Naive thymus-derived CD4-positive, alpha-beta T cell (primary cell): ENCODE measurements at regions of chr14 and their contacts with region 1.

Region 1: DNA sequence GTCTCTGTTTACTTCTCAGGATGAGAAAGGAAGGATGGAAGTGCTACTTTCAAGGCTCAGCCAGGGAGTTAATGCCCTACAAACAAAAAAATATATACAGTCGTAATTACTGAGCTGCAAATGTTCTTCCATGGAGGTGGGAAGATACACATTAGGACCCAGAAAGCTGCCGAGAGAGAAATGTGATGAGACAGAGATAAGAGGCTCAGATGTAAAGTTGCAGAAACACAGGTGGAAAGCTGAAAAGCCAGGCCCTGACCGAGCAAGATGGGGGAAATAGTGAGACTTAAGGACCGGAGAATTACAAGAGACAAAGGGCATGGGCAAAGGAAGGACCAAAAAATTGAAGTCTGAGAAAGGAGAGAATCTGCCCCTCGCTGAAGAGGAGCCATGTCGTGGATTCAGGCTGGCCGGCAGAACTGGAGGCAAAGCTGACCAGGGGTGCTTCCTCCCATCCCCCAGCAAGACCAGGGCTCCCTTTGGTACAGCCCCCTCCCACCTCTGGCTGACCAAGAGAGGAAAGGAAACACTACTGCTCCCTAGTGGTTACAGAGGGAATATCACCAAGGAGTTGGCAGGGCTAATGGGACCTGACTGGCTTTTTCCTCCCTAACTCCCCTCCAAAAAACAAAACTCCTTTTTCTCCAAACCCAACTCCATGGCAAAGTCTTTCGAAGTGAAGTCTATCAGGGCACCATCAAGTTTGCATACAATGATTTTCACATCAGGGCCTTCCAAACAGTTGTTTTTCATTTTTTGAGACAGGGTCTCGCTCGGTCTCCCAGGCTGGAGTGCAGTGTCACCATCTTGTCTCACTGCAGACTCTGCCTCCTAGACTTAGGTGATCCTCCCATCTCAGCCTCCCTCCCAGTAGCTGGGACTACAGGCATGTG is 12.1 kb downstream of the ZFHX2 start:
- DNase-seq: peak in 6 of 9 donors; percentile 20 to 53 (median 34)
- ATAC-seq: peak; percentile 85
- H3K4me3 ChIP-seq: no peak overlapping the region
- H3K4me3 Mint-ChIP-seq: no peak overlapping the region
- H3K27ac ChIP-seq: no peak overlapping the region
- H3K27ac Mint-ChIP-seq: peak overlapping the region in 1 of 9 donors; percentile 83
- H3K4me1 ChIP-seq: no peaks in the 10 kb centered on the region
- H3K4me1 Mint-ChIP-seq: peaks cover 0 to 6% (median 0%) of the 10 kb centered on the region in 7 donors
- H3K27me3 ChIP-seq: no peaks in the 10 kb centered on the region
- H3K27me3 Mint-ChIP-seq: no peaks in the 10 kb centered on the region

Region 2: DNA sequence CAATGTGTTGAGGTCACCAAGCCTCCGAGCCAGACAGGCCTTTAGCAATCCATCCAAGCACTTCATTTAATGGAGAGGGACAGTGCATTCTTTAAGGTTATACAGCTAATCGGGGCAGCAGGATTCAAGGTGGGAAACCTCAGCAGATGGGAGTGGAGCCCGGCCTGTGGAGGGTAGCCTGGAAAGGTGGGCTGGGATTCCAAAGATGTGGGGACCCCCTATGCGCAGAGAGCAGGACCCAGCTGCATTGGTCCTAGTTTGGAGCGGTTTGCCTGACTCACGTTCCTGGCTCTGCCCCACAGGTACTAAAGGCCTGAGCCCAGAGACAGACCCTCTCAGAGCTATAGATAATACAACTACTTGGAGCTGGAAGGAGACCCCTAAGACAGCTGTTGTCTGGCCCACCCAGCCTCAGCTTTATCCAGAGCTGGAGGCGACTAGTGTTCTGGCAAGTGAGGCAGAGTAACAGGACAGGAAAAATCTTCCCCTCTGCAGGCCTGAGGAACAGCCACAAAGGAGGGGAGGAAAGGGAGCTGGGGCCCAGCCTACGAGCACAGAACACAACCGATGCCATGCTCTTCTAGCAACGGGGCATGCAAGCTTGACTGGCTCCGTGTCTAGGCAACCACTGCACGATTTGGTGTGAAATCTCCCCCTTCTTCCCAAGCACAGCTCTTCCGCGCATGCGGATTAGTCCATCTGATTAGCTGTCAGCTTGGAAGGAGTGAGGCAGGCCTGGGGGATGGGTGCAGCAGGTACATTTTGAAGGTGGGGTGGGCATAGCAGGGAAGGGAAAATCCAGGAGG is 103.0 kb before region 1 on chr14:
- CTCF ChIA-PET with region 1: no interaction called
- POLR2A ChIA-PET with region 1: no interaction called
- intact Hi-C with region 1: no loop called
- DNase-seq: peak in 1 of 9 donors; percentile 13
- ATAC-seq: no peak
- H3K4me3 ChIP-seq: no peak overlapping the region
- H3K4me3 Mint-ChIP-seq: no peak overlapping the region
- H3K27ac ChIP-seq: no peak overlapping the region
- H3K27ac Mint-ChIP-seq: no peak overlapping the region
- H3K4me1 ChIP-seq: no peaks in the 10 kb centered on the region
- H3K4me1 Mint-ChIP-seq: peaks cover 0 to 11% (median 0%) of the 10 kb centered on the region in 7 donors
- H3K27me3 ChIP-seq: no peaks in the 10 kb centered on the region
- H3K27me3 Mint-ChIP-seq: peaks cover 0 to 11% (median 0%) of the 10 kb centered on the region in 5 donors

Region 3: GRCh38 chr14:23478111-23478759 is 61.3 kb before region 1 on chr14:
- CTCF ChIA-PET with region 1: interaction called, 43 read pairs
- POLR2A ChIA-PET with region 1: interaction called, 3 read pairs
- intact Hi-C with region 1: loop called (anchors 1 kb)
- DNase-seq: peak; percentile 35 to 75 (median 67)
- ATAC-seq: peak; percentile 89
- H3K4me3 ChIP-seq: no peak overlapping the region
- H3K4me3 Mint-ChIP-seq: peak overlapping the region in 1 of 10 donors; percentile 14
- H3K27ac ChIP-seq: no peak overlapping the region
- H3K27ac Mint-ChIP-seq: peak overlapping the region in 3 of 9 donors; percentile 7 to 61 (median 29)
- H3K4me1 ChIP-seq: no peaks in the 10 kb centered on the region
- H3K4me1 Mint-ChIP-seq: peaks cover 2 to 20% (median 13%) of the 10 kb centered on the region in 7 donors
- H3K27me3 ChIP-seq: no peaks in the 10 kb centered on the region
- H3K27me3 Mint-ChIP-seq: no peaks in the 10 kb centered on the region

Region 4: GRCh38 chr14:23555882-23556699 is 16.6 kb after region 1 on chr14 and contains the start of gene THTPA:
- CTCF ChIA-PET with region 1: interaction called, 25 read pairs
- POLR2A ChIA-PET with region 1: no interaction called
- intact Hi-C with region 1: loop called in 1 of 2 experiments (anchors 1 kb)
- DNase-seq: peak; percentile 84 to 96 (median 89)
- ATAC-seq: peak; percentile 94
- H3K4me3 ChIP-seq: peak within 1 kb of the TSS; percentile 84
- H3K4me3 Mint-ChIP-seq: peak within 1 kb of the TSS; percentile 80 to 99 (median 96)
- H3K27ac ChIP-seq: peak within 1 kb of the TSS; percentile 83
- H3K27ac Mint-ChIP-seq: peak within 1 kb of the TSS; percentile 78 to 97 (median 94)
- H3K4me1 ChIP-seq: peaks cover 10 to 16% of the 10 kb centered on the region in 2 donors
- H3K4me1 Mint-ChIP-seq: peaks cover 18 to 45% (median 38%) of the 10 kb centered on the region in 7 donors
- H3K27me3 ChIP-seq: no peaks in the 10 kb centered on the region
- H3K27me3 Mint-ChIP-seq: peaks cover 0 to under 1% (median 0%) of the 10 kb centered on the region in 5 donors
- total RNA-seq, gene THTPA: 16.4 to 26.7 (median 19.2) TPM